GM12878 (cell line): ENCODE measurements at regions of chr17 and their contacts with region 1.

Region 1: DNA sequence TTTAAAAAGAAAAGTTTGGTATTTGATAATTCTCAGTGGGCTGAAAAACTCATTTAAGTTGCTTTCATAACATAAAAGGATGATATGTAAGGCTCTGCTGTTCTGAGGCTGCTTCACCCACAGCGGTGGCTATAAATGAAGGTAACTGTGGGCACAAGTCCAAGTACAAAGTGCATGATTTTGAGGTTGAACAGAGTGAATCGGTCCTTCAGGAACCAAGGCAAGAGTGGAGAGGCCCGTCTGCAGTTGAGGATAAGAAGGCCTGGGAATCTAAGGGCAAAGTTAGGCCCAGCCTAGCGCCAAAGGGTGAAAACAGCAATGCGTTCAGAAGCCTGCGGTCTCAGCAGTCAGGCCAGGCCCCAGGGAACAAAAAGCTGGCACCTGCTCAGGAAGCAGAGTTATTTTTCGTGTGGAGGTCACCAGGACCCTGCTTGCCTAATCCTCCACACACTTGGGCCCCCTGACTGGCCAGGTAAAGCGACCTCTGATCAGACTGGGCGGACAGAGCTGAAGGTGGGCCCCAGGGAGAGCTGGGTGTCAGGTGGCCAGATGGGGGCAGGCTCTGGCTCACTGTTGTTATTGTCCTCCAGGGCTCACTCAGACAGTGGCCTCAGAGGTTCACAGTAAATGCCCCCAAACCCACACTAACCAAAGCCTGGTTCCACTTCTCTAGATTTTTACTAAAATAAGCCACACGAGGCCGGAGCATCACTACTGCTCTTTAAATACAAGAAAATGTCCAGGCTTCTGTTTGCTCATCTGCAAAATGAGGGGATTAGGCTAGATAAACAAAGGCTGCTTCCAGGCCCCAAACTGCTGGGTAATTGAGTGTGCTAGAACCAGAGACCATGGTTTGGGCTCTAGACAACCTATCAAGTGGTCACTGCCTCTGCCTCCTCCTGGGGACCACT is 46.5 kb downstream of the TEX2 start:
- DNase-seq: peak; percentile 26
- ATAC-seq: peak; percentile 93
- H3K4me3 ChIP-seq: no peak overlapping the region
- H3K27ac ChIP-seq: peak overlapping the region; percentile 24
- H3K4me1 ChIP-seq: peaks cover 22% of the 10 kb centered on the region
- H3K27me3 ChIP-seq: no peaks in the 10 kb centered on the region
- CTCF ChIP-seq: peak; percentile 35 to 42 (median 40); a peak in 5 of 6 replicates
- EP300 ChIP-seq: 0 out of 4 replicates have a peak, but pooled peaks of 1 of the 2 experiments have one; percentile 33
- POLR2A ChIP-seq: no peak
- RAD21 ChIP-seq: peak; percentile 39; the same call in 1 of the 2 replicates

Region 2: DNA sequence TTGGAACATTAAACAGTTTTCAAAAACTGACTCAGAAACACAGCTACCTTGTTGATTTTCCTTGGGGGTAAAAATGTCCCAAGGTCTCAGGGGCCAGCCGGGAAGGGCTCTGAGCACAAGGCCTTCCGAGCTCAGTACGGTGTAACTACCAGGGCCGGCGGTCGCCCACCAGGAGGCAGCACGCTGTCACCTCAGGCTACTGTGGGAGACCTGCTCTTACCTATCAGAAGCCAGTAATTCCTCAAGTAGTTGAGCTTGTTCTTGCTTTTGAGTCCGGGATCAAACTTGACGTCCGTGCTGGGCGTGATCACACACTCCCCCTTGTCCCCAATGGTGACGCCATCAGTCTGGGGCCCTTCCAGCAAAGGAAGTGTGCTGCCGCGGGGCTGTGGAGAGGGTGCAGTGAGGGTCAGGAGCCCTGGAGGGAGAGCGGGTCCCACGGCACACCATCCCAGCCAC is 152.8 kb before region 1 on chr17:
- CTCF ChIA-PET with region 1: no interaction called
- POLR2A ChIA-PET with region 1: interaction called, 10 read pairs
- RAD21 ChIA-PET with region 1: no interaction called
- SMC1A ChIA-PET with region 1: no interaction called
- in situ Hi-C with region 1: no loop called
- intact Hi-C with region 1: no loop called
- DNase-seq: no peak
- ATAC-seq: peak; percentile 51
- H3K4me3 ChIP-seq: no peak overlapping the region
- H3K27ac ChIP-seq: peak overlapping the region; percentile 54; the same call in 1 of the 2 replicates
- H3K4me1 ChIP-seq: peaks cover 37% of the 10 kb centered on the region
- H3K27me3 ChIP-seq: no peaks in the 10 kb centered on the region
- CTCF ChIP-seq: peak; percentile 40 to 49 (median 45)
- EP300 ChIP-seq: no peak
- POLR2A ChIP-seq: no peak
- RAD21 ChIP-seq: peak; percentile 63

Region 3: GRCh38 chr17:64281962-64282727 is 65.6 kb after region 1 on chr17:
- CTCF ChIA-PET with region 1: interaction called, 7 read pairs
- POLR2A ChIA-PET with region 1: no interaction called
- RAD21 ChIA-PET with region 1: interaction called, 3 read pairs
- SMC1A ChIA-PET with region 1: interaction called, 3 read pairs
- in situ Hi-C with region 1: no loop called
- intact Hi-C with region 1: loop called (anchors 2 kb)
- DNase-seq: peak; percentile 17
- ATAC-seq: peak; percentile 63
- H3K4me3 ChIP-seq: no peak overlapping the region
- H3K27ac ChIP-seq: no peak overlapping the region
- H3K4me1 ChIP-seq: peaks cover 12% of the 10 kb centered on the region
- H3K27me3 ChIP-seq: no peaks in the 10 kb centered on the region; a peak in 1 of 4 replicates
- CTCF ChIP-seq: peak; percentile 70 to 74 (median 74)
- EP300 ChIP-seq: no peak
- POLR2A ChIP-seq: no peak
- RAD21 ChIP-seq: peak; percentile 97

Region 4: DNA sequence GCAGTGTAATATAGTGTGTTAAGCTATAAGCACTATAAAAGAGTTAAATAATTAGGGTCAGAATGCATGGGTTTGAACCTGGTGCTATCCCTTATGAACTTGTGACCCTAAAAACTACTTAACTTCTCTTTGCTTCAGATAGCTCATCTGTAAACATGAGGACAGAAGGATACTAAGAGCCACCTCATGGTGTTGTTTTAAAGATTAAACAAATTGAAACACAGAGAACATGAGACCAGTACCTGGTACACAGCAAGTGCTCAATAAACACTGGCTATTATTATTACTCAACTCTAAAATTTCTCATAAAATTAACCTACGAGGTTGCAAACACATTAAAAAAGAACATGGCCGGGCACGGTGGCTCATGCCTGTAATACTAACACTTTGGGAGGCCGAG is 402.3 kb after region 1 on chr17:
- CTCF ChIA-PET with region 1: no interaction called
- POLR2A ChIA-PET with region 1: interaction called, 10 read pairs
- RAD21 ChIA-PET with region 1: no interaction called
- SMC1A ChIA-PET with region 1: no interaction called
- in situ Hi-C with region 1: no loop called
- intact Hi-C with region 1: no loop called
- DNase-seq: no peak
- ATAC-seq: no peak
- H3K4me3 ChIP-seq: no peak overlapping the region
- H3K27ac ChIP-seq: no peak overlapping the region
- H3K4me1 ChIP-seq: no peaks in the 10 kb centered on the region; the same call in 1 of the 2 replicates
- H3K27me3 ChIP-seq: no peaks in the 10 kb centered on the region
- CTCF ChIP-seq: no peak
- EP300 ChIP-seq: no peak
- POLR2A ChIP-seq: no peak
- RAD21 ChIP-seq: no peak